KBM-7 (cell line): ENCODE measurements at regions of chr17 and their contacts with region 1.

Region 1: GRCh38 chr17:49434821-49435670 is 20.4 kb upstream of the PHB1 start:
- DNase-seq: peak; percentile 60

Region 2: DNA sequence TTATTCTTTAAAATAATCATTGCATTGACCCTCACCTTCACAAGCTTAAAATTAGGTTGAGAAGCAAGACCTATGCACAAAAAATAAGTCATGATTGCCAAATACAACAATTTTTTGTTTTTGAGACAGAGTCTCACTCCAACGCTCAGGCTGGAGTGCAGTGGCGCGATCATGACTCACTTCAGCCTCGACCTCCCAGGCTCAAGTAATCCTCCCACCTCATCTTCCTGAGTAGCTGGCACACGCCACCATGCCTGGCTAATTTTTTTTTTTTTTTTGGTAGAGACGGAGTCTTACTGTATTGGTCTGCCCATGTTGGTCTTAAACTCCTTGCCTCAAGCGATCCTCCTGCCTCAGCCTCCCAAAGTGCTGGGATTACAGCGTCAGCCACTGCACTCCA is 97.2 kb before region 1 on chr17:
- in situ Hi-C with region 1: no loop called
- DNase-seq: no peak

Region 3: DNA sequence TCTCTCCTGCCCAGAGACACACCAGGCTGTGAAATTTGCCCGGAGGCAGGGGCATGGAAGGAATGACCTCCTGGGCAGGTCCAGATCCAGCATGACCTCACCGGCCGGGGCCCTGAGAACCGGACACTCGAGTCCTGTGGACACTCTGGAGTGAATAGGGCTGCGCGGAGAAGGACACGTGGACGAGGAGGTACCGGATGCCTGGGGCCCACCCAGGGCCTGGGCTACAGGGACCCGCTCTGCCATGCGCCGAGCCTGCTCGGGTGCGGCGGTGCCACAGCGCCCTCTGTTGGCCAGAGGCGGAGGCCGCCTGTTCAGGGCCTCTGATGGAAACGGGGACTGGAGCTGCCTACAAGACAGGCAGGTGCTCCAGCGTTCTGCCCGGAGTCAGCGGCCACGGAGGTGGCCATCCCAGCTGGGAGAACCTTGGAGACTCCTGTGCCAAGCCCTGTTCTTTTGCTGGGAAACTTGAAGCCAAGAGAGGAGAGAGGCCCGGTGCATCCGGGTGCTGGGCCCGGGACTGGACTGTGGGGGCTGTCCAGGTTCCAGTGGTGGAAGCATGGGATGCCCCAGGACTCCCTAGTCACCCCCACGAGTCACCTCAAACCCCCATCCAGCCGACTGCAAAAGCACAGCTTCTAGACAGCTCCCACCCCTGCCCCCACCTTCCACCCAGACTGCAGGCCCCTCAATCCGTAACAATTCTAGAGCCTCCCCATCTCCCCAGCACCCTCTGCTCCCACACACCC is 121.4 kb after region 1 on chr17:
- in situ Hi-C with region 1: loop called (anchors 10 kb)
- DNase-seq: peak; percentile 90